ENCODE measurements at regions of chr20 and their contacts with region 1.

Region 1: GRCh38 chr20:32031007-32031958 is 20.8 kb upstream of the HCK start:
- DNase-seq: peak; percentile 89
- H3K4me3 ChIP-seq: peak overlapping the region; percentile 34 to 87; a peak in 3 of 4 replicates
- H3K27ac ChIP-seq: no peak overlapping the region
- H3K4me1 ChIP-seq: peaks cover 0 to 7% of the 10 kb centered on the region in 2 experiments; a peak in 1 of 4 replicates
- H3K27me3 ChIP-seq: peaks cover 38% of the 10 kb centered on the region
- CTCF ChIP-seq: peak; percentile 98
- EP300 ChIP-seq: no peak
- RAD21 ChIP-seq: peak; percentile 82

Region 2: GRCh38 chr20:31430568-31431115 is 600.6 kb before region 1 on chr20:
- CTCF ChIA-PET with region 1: no interaction called
- POLR2A ChIA-PET with region 1: no interaction called
- DNase-seq: no peak
- H3K4me3 ChIP-seq: no peak overlapping the region
- H3K27ac ChIP-seq: no peak overlapping the region
- H3K4me1 ChIP-seq: no peaks in the 10 kb centered on the region
- H3K27me3 ChIP-seq: peaks cover 24% of the 10 kb centered on the region
- CTCF ChIP-seq: no peak
- EP300 ChIP-seq: no peak
- RAD21 ChIP-seq: no peak

Region 3: DNA sequence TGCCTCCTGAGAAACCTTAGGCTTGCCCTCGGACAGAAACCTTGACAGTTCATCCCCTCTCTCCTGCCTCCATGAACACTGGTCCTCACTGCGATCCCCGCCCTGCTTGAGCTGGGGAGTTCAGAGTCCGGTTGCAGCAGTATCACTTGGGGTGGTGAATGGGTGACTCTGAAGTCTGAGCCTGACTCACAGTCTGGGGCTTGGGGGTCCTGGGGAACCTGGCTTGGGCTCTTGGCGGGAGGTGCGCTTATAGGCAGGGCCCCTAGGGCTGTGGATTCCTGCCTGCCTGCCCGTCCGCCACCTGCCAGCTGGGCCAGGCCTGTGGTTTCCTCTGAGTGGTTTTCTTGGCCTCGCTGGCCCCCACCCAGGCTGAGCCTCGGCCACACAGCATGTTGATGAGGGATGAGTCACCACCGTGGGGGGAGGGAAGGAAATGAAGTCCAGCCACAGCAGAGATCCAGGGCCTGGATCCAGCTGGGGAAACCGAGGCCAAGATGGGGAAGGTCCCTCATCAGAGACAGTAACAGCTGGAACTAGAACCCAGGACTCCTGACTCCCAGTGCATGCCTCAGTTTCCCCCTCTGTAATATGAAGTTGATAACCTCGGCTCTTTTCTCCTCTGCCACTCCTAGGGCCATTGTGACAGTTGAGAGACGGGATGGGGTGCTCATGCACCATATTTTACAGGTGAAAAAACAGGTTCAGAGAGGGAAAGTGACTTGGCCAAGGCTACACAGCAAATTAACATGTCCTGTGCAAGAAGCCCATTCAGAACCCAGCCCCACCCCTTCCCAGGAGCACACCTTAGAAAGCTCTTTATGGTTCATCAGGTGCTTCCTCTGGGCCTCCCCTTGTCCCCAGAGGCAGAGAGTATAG is 195.1 kb before region 1 on chr20:
- CTCF ChIA-PET with region 1: interaction called, 43 read pairs
- POLR2A ChIA-PET with region 1: no interaction called
- DNase-seq: peak; percentile 57
- H3K4me3 ChIP-seq: no peak overlapping the region
- H3K27ac ChIP-seq: peak overlapping the region; percentile 62 to 88; a peak in 3 of 4 replicates
- H3K4me1 ChIP-seq: peaks cover 37 to 51% of the 10 kb centered on the region in 2 experiments
- H3K27me3 ChIP-seq: no peaks in the 10 kb centered on the region
- CTCF ChIP-seq: no peak
- EP300 ChIP-seq: peak in 1 of 2 experiments; percentile 94; a peak in 3 of 4 replicates
- RAD21 ChIP-seq: no peak

Region 4: GRCh38 chr20:31861346-31862156 is 169.7 kb before region 1 on chr20:
- CTCF ChIA-PET with region 1: interaction called, 170 read pairs
- POLR2A ChIA-PET with region 1: no interaction called
- DNase-seq: peak; percentile 99
- H3K4me3 ChIP-seq: peak overlapping the region; percentile 62 to 63
- H3K27ac ChIP-seq: peak overlapping the region in 1 of 2 experiments; percentile 82; a peak in 2 of 4 replicates
- H3K4me1 ChIP-seq: peaks cover 0 to 21% of the 10 kb centered on the region in 2 experiments; a peak in 2 of 4 replicates
- H3K27me3 ChIP-seq: no peaks in the 10 kb centered on the region
- CTCF ChIP-seq: no peak
- EP300 ChIP-seq: no peak
- RAD21 ChIP-seq: no peak

Region 5: GRCh38 chr20:31951530-31952453 is 79.5 kb before region 1 on chr20 and contains the start of gene PDRG1:
- CTCF ChIA-PET with region 1: interaction called, 38 read pairs
- POLR2A ChIA-PET with region 1: no interaction called
- DNase-seq: peak; percentile 98
- H3K4me3 ChIP-seq: peak within 1 kb of the TSS; percentile 88 to 91
- H3K27ac ChIP-seq: peak within 1 kb of the TSS; percentile 40 to 75; a peak in 3 of 4 replicates
- H3K4me1 ChIP-seq: peaks cover 7 to 12% of the 10 kb centered on the region in 2 experiments; a peak in 3 of 4 replicates
- H3K27me3 ChIP-seq: no peaks in the 10 kb centered on the region
- CTCF ChIP-seq: peak; percentile 90
- EP300 ChIP-seq: no peak
- RAD21 ChIP-seq: peak; percentile 91
- polyA plus RNA-seq, gene PDRG1: 18.9 and 19.7 TPM in 2 replicates

Region 6: DNA sequence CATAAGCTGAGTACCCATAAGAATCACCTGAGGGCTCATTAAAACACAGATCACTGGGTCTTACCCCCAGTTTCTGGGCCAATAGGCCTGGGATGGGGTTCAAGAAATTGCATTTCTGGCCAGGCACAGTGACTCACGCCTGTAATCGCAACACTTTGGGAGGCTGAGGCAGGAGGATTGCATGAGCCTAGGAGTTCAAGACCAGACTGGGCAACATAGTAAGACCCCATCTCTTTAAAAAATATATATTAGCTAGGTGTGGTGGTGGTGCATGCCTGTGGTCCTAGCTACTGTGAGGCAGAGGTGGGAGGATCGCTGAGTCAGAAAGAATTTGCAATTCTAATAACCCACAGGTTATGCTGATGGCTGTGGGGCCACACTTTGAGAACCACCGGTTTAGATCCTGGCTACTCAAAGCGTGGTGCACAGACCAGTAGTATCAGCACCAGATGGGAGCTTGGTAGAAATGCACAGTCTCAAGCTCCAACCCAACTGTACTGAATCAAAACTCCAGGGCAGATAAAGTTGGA is 19.1 kb before region 1 on chr20:
- CTCF ChIA-PET with region 1: interaction called, 23 read pairs
- POLR2A ChIA-PET with region 1: no interaction called
- DNase-seq: no peak
- H3K4me3 ChIP-seq: no peak overlapping the region
- H3K27ac ChIP-seq: no peak overlapping the region
- H3K4me1 ChIP-seq: peaks cover 0 to 7% of the 10 kb centered on the region in 2 experiments; a peak in 1 of 4 replicates
- H3K27me3 ChIP-seq: peaks cover 25% of the 10 kb centered on the region; the same call in 1 of the 2 replicates
- CTCF ChIP-seq: no peak
- EP300 ChIP-seq: no peak
- RAD21 ChIP-seq: no peak

Region 7: DNA sequence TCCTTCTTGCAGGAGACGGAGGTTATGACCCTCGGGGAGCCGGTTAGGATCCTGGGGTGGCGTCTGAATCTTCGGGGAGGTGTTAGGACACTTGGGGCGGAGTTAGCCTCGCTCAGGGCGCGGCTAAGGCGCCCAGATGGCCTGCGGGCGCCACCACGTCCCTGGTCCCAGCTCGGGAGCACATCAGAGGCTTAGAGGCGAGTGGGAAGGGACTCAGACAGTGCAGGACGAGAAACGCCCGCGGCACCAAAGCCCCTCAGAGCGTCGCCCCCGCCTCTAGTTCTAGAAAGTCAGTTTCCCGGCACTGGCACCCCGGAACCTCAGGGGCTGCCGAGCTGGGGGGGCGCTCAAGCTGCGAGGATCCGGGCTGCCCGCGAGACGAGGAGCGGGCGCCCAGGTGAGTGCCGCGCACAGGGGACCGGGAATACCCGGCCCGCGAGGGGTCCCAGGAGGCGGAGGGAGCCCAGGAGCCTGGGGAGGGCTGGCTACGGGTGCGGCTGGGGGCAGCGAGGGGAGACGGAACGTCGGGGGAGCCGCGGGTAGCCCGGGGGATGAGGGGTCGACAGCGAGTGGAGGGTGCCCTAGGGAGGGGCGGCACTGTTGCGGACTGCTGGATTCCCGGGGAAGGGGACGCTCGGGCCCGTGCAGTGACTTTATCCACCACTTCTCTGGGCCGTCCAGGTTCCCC is 21.0 kb after region 1 on chr20 and contains the start of gene HCK:
- CTCF ChIA-PET with region 1: interaction called, 21 read pairs
- POLR2A ChIA-PET with region 1: no interaction called
- DNase-seq: peak; percentile 57
- H3K4me3 ChIP-seq: peak within 1 kb of the TSS in 1 of 2 experiments; percentile 10; a peak in 1 of 4 replicates
- H3K27ac ChIP-seq: no peak within 1 kb of the TSS
- H3K4me1 ChIP-seq: no peaks in the 10 kb centered on the region; a peak in 1 of 4 replicates
- H3K27me3 ChIP-seq: peaks cover 58% of the 10 kb centered on the region
- CTCF ChIP-seq: no peak
- EP300 ChIP-seq: no peak
- RAD21 ChIP-seq: no peak
- polyA plus RNA-seq, gene HCK: not detected in 2 replicates

Region 8: DNA sequence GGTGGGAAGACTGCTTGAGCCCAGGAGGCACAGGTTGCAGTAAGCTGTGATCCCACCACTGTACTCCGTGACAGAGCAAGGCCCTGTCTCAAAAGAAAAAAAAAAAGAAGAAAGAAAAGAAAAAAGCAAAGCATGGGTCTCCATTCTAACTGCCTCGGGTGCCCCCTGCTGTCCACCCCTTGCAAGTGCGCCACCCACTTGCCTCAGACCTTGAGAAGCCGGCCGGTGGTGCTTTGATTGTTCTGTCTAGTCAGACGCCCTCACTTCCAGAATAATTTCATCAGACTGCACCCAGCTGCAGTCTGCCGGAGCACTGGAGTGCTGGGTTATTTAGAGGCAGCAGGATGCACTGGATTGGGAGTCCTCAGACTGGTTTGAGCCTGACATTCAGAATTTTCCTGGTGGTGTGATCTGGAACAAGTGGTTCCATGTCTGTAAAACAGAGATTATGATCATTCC is 60.6 kb after region 1 on chr20:
- CTCF ChIA-PET with region 1: interaction called, 28 read pairs
- POLR2A ChIA-PET with region 1: no interaction called
- DNase-seq: peak; percentile 82
- H3K4me3 ChIP-seq: peak overlapping the region in 1 of 2 experiments; percentile 50; a peak in 1 of 4 replicates
- H3K27ac ChIP-seq: no peak overlapping the region
- H3K4me1 ChIP-seq: no peaks in the 10 kb centered on the region; a peak in 1 of 4 replicates
- H3K27me3 ChIP-seq: peaks cover 10% of the 10 kb centered on the region; the same call in 1 of the 2 replicates
- CTCF ChIP-seq: peak; percentile 95
- EP300 ChIP-seq: no peak
- RAD21 ChIP-seq: peak; percentile 75

Region 9: DNA sequence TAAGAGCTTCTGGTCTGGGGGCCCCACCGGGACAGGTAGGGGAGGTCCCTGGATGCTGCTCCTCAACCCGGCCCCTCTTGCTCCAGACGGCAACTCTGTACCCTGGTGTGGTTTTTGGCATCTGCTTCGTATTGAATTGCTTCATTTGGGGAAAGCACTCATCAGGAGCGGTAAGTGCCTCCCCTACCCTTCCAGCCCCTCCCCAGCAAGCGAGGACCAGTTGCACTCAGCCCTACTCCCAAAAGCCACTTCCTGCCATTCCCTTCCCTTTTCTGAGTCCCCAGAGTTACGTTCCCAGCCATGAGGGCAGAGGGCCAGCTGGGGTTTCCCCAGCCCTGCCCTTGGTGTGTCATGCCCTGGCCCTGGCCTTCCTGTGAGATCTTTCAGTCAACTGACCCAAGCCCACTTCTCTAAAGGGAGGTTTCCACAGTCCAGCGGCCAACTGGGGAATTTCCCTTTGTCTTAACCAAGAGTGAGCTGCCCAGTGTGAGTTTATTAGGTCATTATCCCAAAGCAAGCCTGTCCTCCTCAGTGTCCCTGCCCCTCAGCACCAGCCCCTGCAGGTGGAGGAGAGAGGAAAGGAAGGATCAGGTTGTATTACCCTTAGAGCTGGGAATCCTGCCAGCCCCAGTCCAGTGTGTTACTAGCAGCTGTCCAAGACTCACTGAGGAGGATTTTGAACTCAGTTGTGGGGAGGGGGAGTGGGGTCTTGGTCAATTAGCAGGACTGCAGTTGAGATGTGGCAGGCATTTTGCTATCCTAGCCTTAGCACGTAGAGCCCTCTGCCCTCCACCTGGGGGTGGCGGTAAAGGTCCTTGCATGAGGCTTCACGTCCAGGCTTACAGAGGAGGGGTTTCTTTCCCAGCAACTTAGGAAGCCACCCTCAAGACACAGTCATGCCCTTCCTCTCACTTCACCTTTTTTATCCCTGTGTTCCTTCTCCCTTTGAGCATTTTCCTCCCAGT is 124.0 kb after region 1 on chr20:
- CTCF ChIA-PET with region 1: no interaction called
- POLR2A ChIA-PET with region 1: no interaction called
- DNase-seq: peak; percentile 54
- H3K4me3 ChIP-seq: no peak overlapping the region
- H3K27ac ChIP-seq: peak overlapping the region; percentile 14 to 37; a peak in 3 of 4 replicates
- H3K4me1 ChIP-seq: peaks cover 0 to 2% of the 10 kb centered on the region in 2 experiments; a peak in 2 of 4 replicates
- H3K27me3 ChIP-seq: no peaks in the 10 kb centered on the region
- CTCF ChIP-seq: peak; percentile 39
- EP300 ChIP-seq: no peak
- RAD21 ChIP-seq: peak; percentile 68